CD8-positive, alpha-beta T cell (primary cell): ENCODE measurements at regions of chr18 and their contacts with region 1.

Region 1: GRCh38 chr18:9102508-9103375 is at the start of gene NDUFV2:
- DNase-seq: peak; percentile 96 to 99 (median 98)
- ATAC-seq: peak; percentile 95
- H3K4me3 ChIP-seq: peak within 1 kb of the TSS; percentile 55 to 82
- H3K4me3 Mint-ChIP-seq: peak within 1 kb of the TSS; percentile 89
- H3K27ac ChIP-seq: peak within 1 kb of the TSS; percentile 69 to 87
- H3K27ac Mint-ChIP-seq: peak within 1 kb of the TSS; percentile 94
- H3K4me1 ChIP-seq: peaks cover 46% of the 10 kb centered on the region
- H3K4me1 Mint-ChIP-seq: peaks cover 60% of the 10 kb centered on the region
- H3K27me3 ChIP-seq: no peaks in the 10 kb centered on the region
- H3K27me3 Mint-ChIP-seq: no peaks in the 10 kb centered on the region
- CTCF ChIP-seq: no peak
- total RNA-seq, gene NDUFV2: 229 to 249 TPM

Region 2: DNA sequence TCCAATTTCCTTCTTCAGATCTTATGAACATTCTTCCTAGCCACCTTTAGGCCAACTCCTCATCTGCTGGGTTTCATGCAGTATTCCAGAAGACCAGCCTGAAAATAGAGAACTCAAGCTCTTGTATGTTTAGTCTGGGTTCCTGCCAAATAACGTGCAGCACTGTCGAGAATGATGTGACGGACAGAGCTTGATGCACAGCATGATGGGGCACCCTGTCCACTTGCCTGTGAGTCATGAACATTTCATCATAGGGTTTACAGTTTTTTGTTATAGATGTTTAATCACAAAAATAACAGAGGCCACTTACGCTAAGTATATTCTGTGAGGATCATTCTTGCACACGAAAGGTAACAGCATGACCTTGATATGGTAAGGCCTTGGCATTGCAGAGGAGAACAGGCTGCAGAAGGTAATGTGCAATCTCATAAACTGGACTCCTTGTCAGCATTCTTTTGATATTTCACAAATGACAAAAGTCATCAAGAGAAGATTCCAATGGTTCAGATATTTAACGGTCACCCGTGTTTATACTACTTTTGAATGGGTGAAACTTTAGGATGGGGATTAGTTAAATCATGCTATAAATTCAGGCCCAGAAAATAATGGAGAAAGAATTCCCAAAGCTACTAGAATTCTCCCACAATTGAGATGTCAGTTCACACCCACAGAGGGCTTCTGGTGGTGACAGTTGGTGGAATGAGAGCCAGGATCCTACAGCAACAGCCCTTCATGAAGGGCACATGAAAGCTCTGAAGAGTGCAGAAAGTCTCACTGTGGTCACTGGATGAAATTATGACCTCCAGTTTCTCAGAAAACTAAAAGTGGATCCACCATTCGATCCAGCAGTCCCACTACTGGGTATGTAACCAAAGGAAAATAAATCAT is 889.6 kb before region 1 on chr18:
- CTCF ChIA-PET with region 1: no interaction called
- POLR2A ChIA-PET with region 1: no interaction called
- intact Hi-C with region 1: no loop called
- DNase-seq: no peak
- ATAC-seq: no peak
- H3K4me3 ChIP-seq: no peak overlapping the region
- H3K4me3 Mint-ChIP-seq: no peak overlapping the region
- H3K27ac ChIP-seq: no peak overlapping the region
- H3K27ac Mint-ChIP-seq: no peak overlapping the region
- H3K4me1 ChIP-seq: no peaks in the 10 kb centered on the region
- H3K4me1 Mint-ChIP-seq: no peaks in the 10 kb centered on the region
- H3K27me3 ChIP-seq: no peaks in the 10 kb centered on the region
- H3K27me3 Mint-ChIP-seq: no peaks in the 10 kb centered on the region
- CTCF ChIP-seq: no peak

Region 3: GRCh38 chr18:8654503-8655451 is 448.0 kb before region 1 on chr18:
- CTCF ChIA-PET with region 1: no interaction called
- POLR2A ChIA-PET with region 1: no interaction called
- intact Hi-C with region 1: no loop called
- DNase-seq: peak in 2 of 9 experiments; percentile 26 to 41
- ATAC-seq: no peak
- H3K4me3 ChIP-seq: no peak overlapping the region
- H3K4me3 Mint-ChIP-seq: no peak overlapping the region
- H3K27ac ChIP-seq: no peak overlapping the region
- H3K27ac Mint-ChIP-seq: no peak overlapping the region
- H3K4me1 ChIP-seq: no peaks in the 10 kb centered on the region
- H3K4me1 Mint-ChIP-seq: no peaks in the 10 kb centered on the region
- H3K27me3 ChIP-seq: no peaks in the 10 kb centered on the region
- H3K27me3 Mint-ChIP-seq: peaks cover 5% of the 10 kb centered on the region
- CTCF ChIP-seq: peak; percentile 98

Region 4: DNA sequence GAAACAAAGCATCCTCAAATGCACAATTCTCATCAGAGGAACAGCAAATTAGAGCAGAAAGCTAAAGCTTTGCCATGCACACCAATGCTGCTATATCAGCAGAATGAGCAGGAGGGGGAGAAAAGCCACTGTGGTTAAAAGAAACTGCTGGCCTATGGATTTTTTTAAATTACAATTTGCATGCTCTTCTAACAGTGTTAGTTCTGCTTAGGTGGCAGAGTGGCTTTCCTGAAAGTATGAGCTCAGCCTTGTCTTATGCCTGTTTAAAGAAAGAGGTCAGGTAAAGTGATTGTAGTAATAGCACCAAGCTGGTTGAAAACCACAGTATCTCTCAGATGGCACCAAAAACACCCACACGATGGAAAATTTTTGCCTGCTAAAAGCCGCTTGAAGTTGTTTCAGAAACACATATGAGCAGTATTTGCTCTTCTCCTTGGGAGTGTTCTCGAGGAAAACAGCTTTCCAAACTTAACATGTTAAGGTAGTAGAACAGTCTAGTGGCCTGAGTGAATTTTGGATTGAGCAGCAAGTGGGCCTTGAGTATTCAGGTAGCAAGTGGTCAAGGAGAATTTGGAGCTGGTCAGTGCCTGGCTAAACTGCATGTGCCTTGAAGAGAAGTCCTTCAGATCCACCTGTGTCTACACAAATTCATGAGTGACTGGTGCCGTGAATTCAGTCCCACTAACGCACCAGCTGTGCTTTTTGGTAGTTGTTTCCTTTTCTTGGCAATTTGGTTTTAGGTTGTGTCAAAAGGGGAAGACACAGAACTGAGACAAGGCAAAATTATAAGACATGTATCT is 19.8 kb before region 1 on chr18:
- CTCF ChIA-PET with region 1: interaction called, 5 read pairs
- POLR2A ChIA-PET with region 1: interaction called, 10 read pairs
- intact Hi-C with region 1: no loop called
- DNase-seq: peak in 5 of 9 experiments; percentile 16 to 62 (median 46)
- ATAC-seq: peak; percentile 90
- H3K4me3 ChIP-seq: no peak overlapping the region
- H3K4me3 Mint-ChIP-seq: peak overlapping the region; percentile 36
- H3K27ac ChIP-seq: peak overlapping the region; percentile 28 to 66
- H3K27ac Mint-ChIP-seq: peak overlapping the region; percentile 87
- H3K4me1 ChIP-seq: peaks cover 15% of the 10 kb centered on the region
- H3K4me1 Mint-ChIP-seq: peaks cover 23% of the 10 kb centered on the region
- H3K27me3 ChIP-seq: no peaks in the 10 kb centered on the region
- H3K27me3 Mint-ChIP-seq: no peaks in the 10 kb centered on the region
- CTCF ChIP-seq: no peak

Region 5: GRCh38 chr18:9117980-9118841 is 15.5 kb after region 1 on chr18:
- CTCF ChIA-PET with region 1: interaction called, 10 read pairs
- POLR2A ChIA-PET with region 1: interaction called, 31 read pairs
- intact Hi-C with region 1: loop called (anchors 1 kb)
- DNase-seq: peak in 2 of 9 experiments; percentile 66 to 83
- ATAC-seq: peak; percentile 50
- H3K4me3 ChIP-seq: peak overlapping the region; percentile 14 to 42
- H3K4me3 Mint-ChIP-seq: peak overlapping the region; percentile 75
- H3K27ac ChIP-seq: peak overlapping the region; percentile 76 to 86
- H3K27ac Mint-ChIP-seq: peak overlapping the region; percentile 95
- H3K4me1 ChIP-seq: peaks cover 84% of the 10 kb centered on the region
- H3K4me1 Mint-ChIP-seq: peaks cover 80% of the 10 kb centered on the region
- H3K27me3 ChIP-seq: no peaks in the 10 kb centered on the region
- H3K27me3 Mint-ChIP-seq: no peaks in the 10 kb centered on the region
- CTCF ChIP-seq: no peak

Region 6: GRCh38 chr18:9147440-9148202 is 44.9 kb after region 1 on chr18:
- CTCF ChIA-PET with region 1: interaction called, 7 read pairs
- POLR2A ChIA-PET with region 1: interaction called, 5 read pairs
- intact Hi-C with region 1: loop called in 1 of 2 experiments (anchors 1 kb)
- DNase-seq: peak in 4 of 9 experiments; percentile 22 to 82 (median 52)
- ATAC-seq: peak; percentile 76
- H3K4me3 ChIP-seq: no peak overlapping the region
- H3K4me3 Mint-ChIP-seq: no peak overlapping the region
- H3K27ac ChIP-seq: peak overlapping the region in 1 of 2 experiments; percentile 63
- H3K27ac Mint-ChIP-seq: peak overlapping the region; percentile 84
- H3K4me1 ChIP-seq: peaks cover 45% of the 10 kb centered on the region
- H3K4me1 Mint-ChIP-seq: peaks cover 77% of the 10 kb centered on the region
- H3K27me3 ChIP-seq: no peaks in the 10 kb centered on the region
- H3K27me3 Mint-ChIP-seq: no peaks in the 10 kb centered on the region
- CTCF ChIP-seq: peak; percentile 71